ENCODE measurements at regions of chr12 and their contacts with region 1.

Region 1: DNA sequence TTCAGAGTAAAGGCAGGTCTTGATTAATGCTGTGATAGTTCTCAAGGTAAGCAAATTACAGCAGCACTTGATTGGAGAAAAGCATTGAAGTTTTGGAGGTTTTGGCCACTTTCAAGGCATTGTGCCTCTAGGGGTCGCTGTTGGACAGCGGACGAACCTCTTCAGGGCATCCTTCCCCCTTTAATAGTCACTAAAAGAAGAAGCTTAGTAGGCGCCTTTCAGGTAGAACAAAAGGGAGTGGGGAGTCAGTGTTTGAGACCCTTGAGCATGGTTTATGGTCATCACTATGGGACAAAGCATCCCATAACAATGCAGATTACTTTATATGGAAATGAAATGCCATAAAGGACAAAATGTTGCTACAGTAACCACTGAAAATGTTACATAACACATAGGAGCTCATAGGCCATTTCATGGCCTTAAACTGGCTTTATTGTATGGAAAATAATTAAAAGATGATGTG is 199.5 kb upstream of the DCN start:
- DNase-seq: peak; percentile 94
- H3K4me3 ChIP-seq: peak overlapping the region; percentile 44
- H3K27ac ChIP-seq: peak overlapping the region; percentile 72 to 87
- H3K4me1 ChIP-seq: no peaks in the 10 kb centered on the region
- H3K27me3 ChIP-seq: no peaks in the 10 kb centered on the region
- CTCF ChIP-seq: peak; percentile 86 to 87 (median 87)
- POLR2A ChIP-seq: no peak

Region 2: DNA sequence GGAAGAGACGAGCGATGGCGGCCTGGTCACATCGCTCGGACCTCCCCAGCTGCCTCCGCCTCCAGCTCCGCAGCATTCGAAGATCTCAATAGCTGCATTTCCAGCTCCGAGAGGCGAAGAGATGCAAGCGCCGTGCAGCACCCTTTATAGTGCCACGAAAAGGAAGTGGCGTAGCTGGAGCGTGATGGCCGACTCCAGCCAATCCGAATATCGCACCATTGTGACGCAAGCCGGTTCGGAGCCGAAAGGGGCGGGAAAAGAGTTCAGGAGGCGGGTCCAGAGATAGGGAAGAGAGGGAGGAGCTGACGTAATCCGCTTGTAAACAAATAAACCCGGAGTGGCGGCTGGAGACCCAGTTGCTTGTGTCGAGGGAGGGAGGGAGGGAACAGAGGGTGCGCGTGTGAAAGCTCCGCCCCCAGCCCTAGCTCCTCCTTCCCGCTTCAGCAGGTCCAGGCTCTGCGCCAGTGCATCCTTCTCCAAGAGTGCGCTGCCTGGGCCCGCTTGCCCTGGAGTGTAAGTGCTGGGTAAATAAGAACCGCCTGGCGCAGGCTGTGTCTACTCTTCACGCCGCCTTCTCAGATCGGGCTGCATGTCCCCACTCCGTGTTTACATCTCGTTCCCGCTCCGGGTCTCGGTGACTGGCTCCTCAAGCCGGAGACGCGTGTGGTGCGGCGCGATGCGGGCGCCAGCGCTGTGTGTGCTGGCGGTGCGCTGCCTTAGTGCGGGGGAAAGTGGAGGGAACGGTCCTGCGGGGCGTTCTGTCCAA is 763.8 kb after region 1 on chr12 and contains the start of gene BTG1:
- intact Hi-C with region 1: loop called (anchors 10 kb)
- DNase-seq: peak; percentile 100
- H3K4me3 ChIP-seq: peak within 1 kb of the TSS; percentile 92 to 99
- H3K27ac ChIP-seq: peak within 1 kb of the TSS; percentile 100
- H3K4me1 ChIP-seq: peaks cover 6% of the 10 kb centered on the region
- H3K27me3 ChIP-seq: no peaks in the 10 kb centered on the region
- CTCF ChIP-seq: peak in 2 of 3 experiments; percentile 18 to 38
- POLR2A ChIP-seq: peak; percentile 98
- total RNA-seq, gene BTG1: 23.8 to 37.0 TPM